ENCODE measurements at regions of chr12 and their contacts with region 1.

Region 1: GRCh38 chr12:32918890-32919801 is 22.6 kb upstream of the PKP2 start:
- DNase-seq: no peak
- ATAC-seq: peak; percentile 61
- H3K4me3 ChIP-seq: no peak overlapping the region
- H3K27ac ChIP-seq: no peak overlapping the region
- H3K4me1 ChIP-seq: no peaks in the 10 kb centered on the region
- H3K27me3 ChIP-seq: no peaks in the 10 kb centered on the region
- CTCF ChIP-seq: peak; percentile 44 to 56 (median 47); a peak in 5 of 6 replicates
- EP300 ChIP-seq: no peak
- POLR2A ChIP-seq: no peak
- RAD21 ChIP-seq: peak; percentile 78

Region 2: GRCh38 chr12:31659087-31659933 is 1259.8 kb before region 1 on chr12 and contains the start of gene ETFBKMT:
- CTCF ChIA-PET with region 1: no interaction called
- POLR2A ChIA-PET with region 1: no interaction called
- RAD21 ChIA-PET with region 1: no interaction called
- SMC1A ChIA-PET with region 1: no interaction called
- in situ Hi-C with region 1: loop called (anchors 25 kb)
- intact Hi-C with region 1: loop called (anchors 5 kb)
- DNase-seq: peak; percentile 90
- ATAC-seq: peak; percentile 99
- H3K4me3 ChIP-seq: peak within 1 kb of the TSS; percentile 85
- H3K27ac ChIP-seq: peak within 1 kb of the TSS; percentile 87
- H3K4me1 ChIP-seq: peaks cover 5% of the 10 kb centered on the region; the same call in 1 of the 2 replicates
- H3K27me3 ChIP-seq: no peaks in the 10 kb centered on the region
- CTCF ChIP-seq: peak; percentile 18 to 34 (median 22); a peak in 4 of 6 replicates
- EP300 ChIP-seq: no peak
- POLR2A ChIP-seq: peak; percentile 54; the same call in 1 of the 2 replicates
- RAD21 ChIP-seq: no peak
- polyA plus RNA-seq, gene ETFBKMT: 0.49 to 0.79 TPM

Region 3: DNA sequence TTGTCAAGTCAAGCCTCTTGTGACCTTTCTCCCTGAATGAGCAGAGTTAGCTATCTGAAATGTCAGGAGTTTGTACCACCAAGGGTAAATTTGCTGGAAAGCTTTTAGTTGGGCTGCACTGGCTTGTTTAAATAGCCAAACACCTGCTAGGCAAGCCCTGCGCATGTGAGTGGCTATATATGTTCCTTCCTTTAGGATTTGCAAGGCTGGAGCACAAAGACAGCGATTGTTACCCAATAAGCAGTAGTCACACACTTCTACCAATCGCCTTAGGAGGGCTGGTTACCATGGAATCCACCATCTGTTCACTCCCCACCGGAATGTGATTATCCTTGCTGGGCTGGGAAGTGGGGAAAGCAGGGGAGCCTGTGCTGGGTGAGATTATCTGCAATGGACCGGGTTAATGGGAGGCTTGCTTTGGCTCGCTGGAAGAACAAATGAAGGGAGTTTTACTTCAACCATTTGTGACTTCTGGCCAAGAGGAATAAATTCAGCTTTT is 417.3 kb before region 1 on chr12:
- CTCF ChIA-PET with region 1: no interaction called
- POLR2A ChIA-PET with region 1: no interaction called
- RAD21 ChIA-PET with region 1: no interaction called
- SMC1A ChIA-PET with region 1: no interaction called
- in situ Hi-C with region 1: no loop called
- intact Hi-C with region 1: no loop called
- DNase-seq: no peak
- ATAC-seq: no peak
- H3K4me3 ChIP-seq: no peak overlapping the region
- H3K27ac ChIP-seq: no peak overlapping the region
- H3K4me1 ChIP-seq: no peaks in the 10 kb centered on the region
- H3K27me3 ChIP-seq: no peaks in the 10 kb centered on the region; a peak in 1 of 4 replicates
- CTCF ChIP-seq: no peak
- EP300 ChIP-seq: no peak
- POLR2A ChIP-seq: no peak
- RAD21 ChIP-seq: no peak

Region 4: DNA sequence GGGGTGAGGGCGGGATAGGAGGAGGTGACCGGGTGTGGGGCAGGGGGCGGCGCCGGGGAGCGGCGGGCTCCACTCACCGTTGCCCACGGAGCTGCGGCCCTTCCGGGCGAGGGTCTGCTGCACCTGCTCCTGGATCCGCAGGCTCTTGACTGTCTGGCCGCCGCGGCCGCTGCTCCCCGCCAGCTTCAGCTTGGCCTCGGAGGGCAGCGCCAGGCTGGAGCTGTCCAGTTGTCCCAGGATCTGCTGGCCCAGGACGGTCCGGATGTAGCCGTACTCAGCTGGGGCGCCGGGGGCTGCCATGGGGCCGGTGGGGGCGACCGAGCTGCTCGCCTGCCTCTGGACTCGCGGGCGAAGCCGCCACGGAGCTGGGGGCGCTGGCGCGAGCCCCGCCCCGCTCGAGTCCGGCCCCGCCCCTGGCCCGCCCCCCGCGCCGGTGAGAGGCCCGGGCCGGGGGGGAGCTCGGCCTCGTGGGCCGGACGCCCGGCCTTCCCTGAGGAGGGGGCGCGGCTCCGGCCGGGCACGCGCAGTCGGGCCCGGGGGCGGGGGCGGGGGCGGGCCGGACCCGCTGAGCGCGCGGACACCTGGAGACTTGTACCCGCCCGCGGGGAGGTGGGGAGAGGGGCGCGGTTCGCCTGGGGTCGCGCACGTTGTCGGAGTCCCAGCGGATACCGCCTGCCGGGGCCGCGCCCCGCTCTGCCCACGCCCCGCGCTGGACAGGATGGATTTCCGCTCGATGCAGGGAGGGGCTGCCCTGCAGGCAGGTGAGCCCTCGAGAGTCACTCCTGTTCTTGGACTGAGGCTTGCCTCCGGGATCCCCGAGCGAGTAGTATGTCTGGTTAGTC is 22.5 kb before region 1 on chr12 and contains the start of gene PKP2:
- CTCF ChIA-PET with region 1: no interaction called
- POLR2A ChIA-PET with region 1: no interaction called
- RAD21 ChIA-PET with region 1: no interaction called
- SMC1A ChIA-PET with region 1: no interaction called
- in situ Hi-C with region 1: no loop called
- intact Hi-C with region 1: no loop called
- DNase-seq: no peak
- ATAC-seq: no peak
- H3K4me3 ChIP-seq: no peak within 1 kb of the TSS
- H3K27ac ChIP-seq: no peak within 1 kb of the TSS
- H3K4me1 ChIP-seq: no peaks in the 10 kb centered on the region
- H3K27me3 ChIP-seq: peaks cover 0 to 20% of the 10 kb centered on the region in 2 experiments
- CTCF ChIP-seq: no peak
- EP300 ChIP-seq: no peak
- POLR2A ChIP-seq: no peak
- RAD21 ChIP-seq: no peak
- polyA plus RNA-seq, gene PKP2: 0.02 to 0.13 TPM

Region 5: GRCh38 chr12:32944195-32944594 is 25.0 kb after region 1 on chr12:
- CTCF ChIA-PET with region 1: no interaction called
- POLR2A ChIA-PET with region 1: no interaction called
- RAD21 ChIA-PET with region 1: no interaction called
- SMC1A ChIA-PET with region 1: no interaction called
- in situ Hi-C with region 1: no loop called
- intact Hi-C with region 1: no loop called
- DNase-seq: no peak
- ATAC-seq: no peak
- H3K4me3 ChIP-seq: no peak overlapping the region
- H3K27ac ChIP-seq: no peak overlapping the region
- H3K4me1 ChIP-seq: no peaks in the 10 kb centered on the region
- H3K27me3 ChIP-seq: no peaks in the 10 kb centered on the region
- CTCF ChIP-seq: no peak
- EP300 ChIP-seq: no peak
- POLR2A ChIP-seq: no peak
- RAD21 ChIP-seq: no peak

Region 6: GRCh38 chr12:34016361-34016760 is 1097.2 kb after region 1 on chr12:
- CTCF ChIA-PET with region 1: no interaction called
- POLR2A ChIA-PET with region 1: no interaction called
- RAD21 ChIA-PET with region 1: no interaction called
- SMC1A ChIA-PET with region 1: no interaction called
- in situ Hi-C with region 1: no loop called
- intact Hi-C with region 1: loop called (anchors 10 kb)
- DNase-seq: no peak
- ATAC-seq: peak; percentile 57; the same call in 2 of the 3 replicates
- H3K4me3 ChIP-seq: no peak overlapping the region
- H3K27ac ChIP-seq: no peak overlapping the region
- H3K4me1 ChIP-seq: no peaks in the 10 kb centered on the region
- H3K27me3 ChIP-seq: no peaks in the 10 kb centered on the region
- CTCF ChIP-seq: no peak
- EP300 ChIP-seq: no peak
- POLR2A ChIP-seq: no peak
- RAD21 ChIP-seq: no peak

Region 7: DNA sequence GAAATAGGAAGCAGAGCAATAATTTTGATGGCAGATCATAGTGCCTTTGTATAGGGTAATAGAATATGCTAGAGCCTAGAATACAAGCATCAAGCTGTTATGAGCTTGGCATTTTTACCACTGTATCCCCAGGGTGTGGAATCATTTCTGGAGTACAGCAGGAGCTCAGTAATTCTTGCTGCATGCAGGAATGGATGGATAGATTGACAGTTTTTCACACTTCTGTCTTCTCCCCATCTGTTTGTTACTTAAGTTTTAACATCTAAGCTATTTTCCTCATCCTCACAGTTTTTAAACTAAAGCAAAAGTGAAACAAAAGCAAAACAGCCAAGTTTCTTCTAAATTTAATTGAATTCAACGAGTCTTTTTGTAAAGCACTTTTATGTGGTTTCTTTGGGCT is 1135.8 kb after region 1 on chr12:
- CTCF ChIA-PET with region 1: no interaction called
- POLR2A ChIA-PET with region 1: no interaction called
- RAD21 ChIA-PET with region 1: no interaction called
- SMC1A ChIA-PET with region 1: no interaction called
- in situ Hi-C with region 1: no loop called
- intact Hi-C with region 1: no loop called
- DNase-seq: no peak
- ATAC-seq: no peak
- H3K4me3 ChIP-seq: no peak overlapping the region
- H3K27ac ChIP-seq: no peak overlapping the region
- H3K4me1 ChIP-seq: no peaks in the 10 kb centered on the region
- H3K27me3 ChIP-seq: no peaks in the 10 kb centered on the region
- CTCF ChIP-seq: no peak
- EP300 ChIP-seq: no peak
- POLR2A ChIP-seq: no peak
- RAD21 ChIP-seq: no peak

Measured in GM12878 (cell line).